ENCODE measurements at regions of chr3 and their contacts with region 1.

Region 1: DNA sequence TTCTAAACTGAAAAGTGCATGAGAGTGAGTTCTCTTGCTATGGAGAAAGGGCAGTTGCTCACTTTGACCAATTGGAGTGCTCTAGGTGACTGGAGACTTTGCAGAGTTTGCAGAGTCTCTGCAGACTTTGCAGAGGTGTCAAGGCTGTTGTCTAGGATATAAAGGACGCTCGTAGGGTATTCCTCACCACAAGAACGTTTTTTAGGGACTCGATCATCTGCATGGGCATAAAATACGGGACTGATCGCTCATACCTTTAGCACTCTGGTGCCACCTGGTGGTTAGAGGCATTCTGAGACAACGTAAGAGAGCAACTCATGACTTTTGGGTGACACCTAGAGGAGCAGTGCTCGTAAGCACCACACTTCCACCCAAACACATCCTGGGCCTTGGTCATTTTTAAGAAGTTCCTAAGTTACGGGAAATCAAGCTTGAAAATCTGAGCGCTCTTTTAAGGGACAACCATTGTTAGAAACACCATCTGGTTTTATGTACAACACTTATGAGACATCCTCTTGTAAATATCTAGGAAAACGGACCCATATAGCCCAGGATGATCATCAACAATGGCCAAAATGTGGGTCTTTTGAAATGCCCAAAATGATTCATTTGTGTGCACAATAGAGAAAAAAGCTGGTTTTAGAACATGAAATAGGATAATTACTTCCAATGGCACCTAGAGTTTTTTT is 51.6 kb upstream of the XCR1 start:
- DNase-seq: peak; percentile 48
- ATAC-seq: peak; percentile 99
- H3K4me3 Mint-ChIP-seq: peak overlapping the region; percentile 3
- H3K27ac Mint-ChIP-seq: no peak overlapping the region
- H3K4me1 Mint-ChIP-seq: peaks cover 3% of the 10 kb centered on the region
- H3K27me3 Mint-ChIP-seq: no peaks in the 10 kb centered on the region
- CTCF ChIP-seq: peak; percentile 77

Region 2: DNA sequence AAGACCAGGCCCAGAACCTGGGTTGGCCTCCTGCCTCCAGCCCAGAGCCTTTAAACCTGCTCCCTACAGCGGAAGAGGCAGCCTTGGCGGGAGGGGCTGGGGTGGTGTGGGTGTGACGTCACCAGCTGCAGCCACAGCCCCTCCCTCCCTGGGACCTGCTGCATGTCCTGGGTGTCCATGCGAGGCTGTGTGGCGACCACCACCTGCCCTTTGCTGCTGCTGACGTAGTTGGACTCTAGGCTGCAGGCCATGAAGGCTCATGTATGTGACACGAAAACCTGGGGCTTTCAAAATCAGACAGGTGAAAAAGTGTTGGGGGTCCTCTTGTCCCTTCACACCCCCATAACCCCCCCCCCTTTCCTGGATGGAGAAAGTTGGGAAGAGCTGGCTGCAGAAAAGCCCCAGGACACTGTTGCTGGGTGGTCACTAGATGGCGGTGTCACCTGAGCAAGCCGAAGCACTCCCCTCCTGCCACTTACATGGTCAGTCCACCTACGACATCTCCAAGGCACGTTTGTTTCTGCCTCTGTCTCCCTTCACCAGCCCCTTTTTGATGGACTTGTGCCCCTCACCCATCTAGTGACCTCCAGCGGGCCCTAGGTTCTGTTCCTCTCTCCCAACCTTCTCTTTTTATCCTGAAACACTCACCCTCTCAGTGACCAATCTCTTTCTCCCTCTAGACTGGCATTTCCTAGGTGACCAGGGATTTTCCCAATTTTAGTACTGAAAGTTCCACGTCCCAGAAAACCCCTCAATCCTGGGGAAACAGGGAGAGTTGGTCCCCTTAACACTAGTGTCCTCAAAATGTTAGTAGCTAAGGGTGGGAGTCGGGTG is 317.8 kb before region 1 on chr3:
- CTCF ChIA-PET with region 1: interaction called, 3 read pairs
- POLR2A ChIA-PET with region 1: no interaction called
- intact Hi-C with region 1: loop called (anchors 1 kb)
- DNase-seq: no peak
- ATAC-seq: no peak
- H3K4me3 Mint-ChIP-seq: no peak overlapping the region
- H3K27ac Mint-ChIP-seq: no peak overlapping the region
- H3K4me1 Mint-ChIP-seq: peaks cover 3% of the 10 kb centered on the region
- H3K27me3 Mint-ChIP-seq: no peaks in the 10 kb centered on the region
- CTCF ChIP-seq: no peak

Region 3: GRCh38 chr3:45962033-45962432 is 116.8 kb before region 1 on chr3:
- CTCF ChIA-PET with region 1: interaction called, 11 read pairs
- POLR2A ChIA-PET with region 1: no interaction called
- intact Hi-C with region 1: no loop called
- DNase-seq: no peak
- ATAC-seq: peak; percentile 65
- H3K4me3 Mint-ChIP-seq: no peak overlapping the region
- H3K27ac Mint-ChIP-seq: peak overlapping the region; percentile 41
- H3K4me1 Mint-ChIP-seq: peaks cover 12% of the 10 kb centered on the region
- H3K27me3 Mint-ChIP-seq: no peaks in the 10 kb centered on the region
- CTCF ChIP-seq: no peak

Region 4: DNA sequence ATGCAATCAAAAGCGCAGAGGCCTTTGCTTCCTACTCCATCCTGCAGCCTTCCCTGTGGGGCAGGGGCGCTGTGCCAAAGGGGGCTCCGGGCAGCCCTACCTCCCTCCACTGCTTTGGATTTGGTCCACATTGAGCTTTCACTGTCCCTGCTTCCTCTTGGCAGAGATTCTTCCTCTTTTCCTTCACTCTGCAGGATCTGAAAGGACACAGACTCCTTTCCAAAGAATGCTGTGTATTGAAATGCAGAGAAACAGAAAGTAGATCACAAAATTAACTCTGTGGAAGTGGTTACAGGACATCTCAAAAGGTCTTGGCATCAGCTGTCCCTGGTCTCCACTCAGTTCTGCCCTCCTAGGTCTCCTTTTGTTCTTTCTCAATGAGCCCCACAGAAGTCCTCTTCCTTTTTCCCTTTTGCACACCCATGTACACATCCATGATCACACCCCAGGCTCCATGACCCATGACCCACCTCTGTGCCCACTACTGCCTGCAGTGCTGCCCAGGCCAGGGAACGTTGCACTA is 65.2 kb after region 1 on chr3:
- CTCF ChIA-PET with region 1: no interaction called
- POLR2A ChIA-PET with region 1: no interaction called
- intact Hi-C with region 1: no loop called
- DNase-seq: no peak
- ATAC-seq: no peak
- H3K4me3 Mint-ChIP-seq: no peak overlapping the region
- H3K27ac Mint-ChIP-seq: no peak overlapping the region
- H3K4me1 Mint-ChIP-seq: peaks cover 10% of the 10 kb centered on the region
- H3K27me3 Mint-ChIP-seq: no peaks in the 10 kb centered on the region
- CTCF ChIP-seq: no peak

Region 5: GRCh38 chr3:46186471-46187340 is 107.8 kb after region 1 on chr3:
- CTCF ChIA-PET with region 1: interaction called, 3 read pairs
- POLR2A ChIA-PET with region 1: no interaction called
- intact Hi-C with region 1: loop called (anchors 5 kb)
- DNase-seq: no peak
- ATAC-seq: peak; percentile 90
- H3K4me3 Mint-ChIP-seq: peak overlapping the region; percentile 52
- H3K27ac Mint-ChIP-seq: peak overlapping the region; percentile 68
- H3K4me1 Mint-ChIP-seq: peaks cover 58% of the 10 kb centered on the region
- H3K27me3 Mint-ChIP-seq: no peaks in the 10 kb centered on the region
- CTCF ChIP-seq: no peak

Region 6: GRCh38 chr3:46368569-46368968 is 289.7 kb after region 1 on chr3:
- CTCF ChIA-PET with region 1: interaction called, 48 read pairs
- POLR2A ChIA-PET with region 1: interaction called, 5 read pairs
- intact Hi-C with region 1: loop called (anchors 2 kb)
- DNase-seq: peak; percentile 33
- ATAC-seq: peak; percentile 91
- H3K4me3 Mint-ChIP-seq: peak overlapping the region; percentile 7
- H3K27ac Mint-ChIP-seq: no peak overlapping the region
- H3K4me1 Mint-ChIP-seq: peaks cover 34% of the 10 kb centered on the region
- H3K27me3 Mint-ChIP-seq: peaks cover 2% of the 10 kb centered on the region
- CTCF ChIP-seq: no peak